Sigmoid colon (tissue), 7 donors: ENCODE measurements at regions of chrX and their contacts with region 1.

Region 1: DNA sequence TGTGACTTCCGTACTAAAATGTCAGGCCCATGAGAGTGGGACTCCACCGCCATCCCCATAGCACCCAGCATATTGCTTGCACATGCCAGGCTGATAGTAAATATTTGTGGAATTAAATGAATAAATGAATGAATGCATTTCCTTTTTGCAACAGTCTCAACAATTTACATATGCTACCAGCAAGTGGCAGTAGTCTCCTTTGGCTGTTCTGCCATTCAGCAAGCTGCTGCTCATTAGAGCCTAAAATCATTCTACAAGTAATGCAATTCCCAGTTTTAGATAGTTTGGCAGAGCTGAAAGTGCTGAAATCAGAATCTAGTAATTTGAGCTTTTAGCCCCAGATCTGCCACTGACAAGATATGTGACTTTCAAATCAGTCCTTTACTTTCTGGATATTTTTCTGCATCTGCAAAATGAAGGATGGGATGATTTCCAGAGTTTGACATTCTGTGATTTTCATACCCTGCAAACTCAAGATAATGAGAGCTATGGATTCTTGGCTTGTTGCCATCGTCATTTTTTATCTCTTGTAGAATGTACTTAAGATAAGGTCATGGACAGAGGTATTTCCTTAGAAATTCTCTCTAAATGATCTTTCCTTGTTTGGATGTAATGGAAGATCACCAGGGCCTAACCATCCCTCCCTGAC is 35.7 kb upstream of the INTS6L start:
- DNase-seq: no peak
- H3K4me3 ChIP-seq: no peak overlapping the region
- H3K27ac ChIP-seq: no peak overlapping the region
- H3K4me1 ChIP-seq: no peaks in the 10 kb centered on the region
- H3K27me3 ChIP-seq: no peaks in the 10 kb centered on the region
- CTCF ChIP-seq: peak in 3 of 4 experiments; percentile 15 to 45 (median 33)
- EP300 ChIP-seq: no peak
- POLR2A ChIP-seq: no peak

Region 2: DNA sequence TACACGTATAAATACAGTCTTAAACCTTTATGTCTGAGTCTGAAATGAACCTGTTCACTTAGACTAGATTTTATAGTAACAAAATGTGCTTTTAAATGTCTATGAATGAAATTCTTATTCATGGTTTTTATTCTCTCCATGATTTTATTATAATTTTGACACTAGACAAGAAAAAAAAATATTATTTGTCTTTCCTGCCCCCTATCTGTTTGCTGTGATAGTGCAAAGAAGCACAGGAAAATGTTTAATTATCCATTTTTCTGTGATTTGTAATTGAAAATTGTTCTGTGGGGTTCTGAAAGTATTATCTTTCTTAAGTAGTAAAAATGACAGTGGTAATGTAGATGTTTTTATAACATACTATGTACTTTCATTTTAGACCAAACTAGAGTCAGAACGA is 87.7 kb after region 1 on chrX:
- intact Hi-C with region 1: loop called (anchors 2 kb)
- DNase-seq: no peak
- H3K4me3 ChIP-seq: no peak overlapping the region
- H3K27ac ChIP-seq: no peak overlapping the region
- H3K4me1 ChIP-seq: no peaks in the 10 kb centered on the region
- H3K27me3 ChIP-seq: no peaks in the 10 kb centered on the region
- CTCF ChIP-seq: peak in 3 of 4 experiments; percentile 6 to 33 (median 19)
- EP300 ChIP-seq: no peak
- POLR2A ChIP-seq: no peak